ENCODE measurements at regions of chr13 and their contacts with region 1.

Region 1: GRCh38 chr13:50348371-50348770 is 333.1 kb downstream of the KCNRG start:
- DNase-seq: no peak
- ATAC-seq: no peak
- H3K4me3 ChIP-seq: no peak overlapping the region
- H3K27ac ChIP-seq: no peak overlapping the region
- H3K4me1 ChIP-seq: peaks cover 2% of the 10 kb centered on the region; the same call in 1 of the 2 replicates
- H3K27me3 ChIP-seq: peaks cover 14% of the 10 kb centered on the region
- CTCF ChIP-seq: no peak
- POLR2A ChIP-seq: no peak
- RAD21 ChIP-seq: no peak

Region 2: GRCh38 chr13:48843630-48844380 is 1504.6 kb before region 1 on chr13:
- CTCF ChIA-PET with region 1: no interaction called
- POLR2A ChIA-PET with region 1: no interaction called
- dilution Hi-C with region 1: no loop called
- in situ Hi-C with region 1: no loop called
- intact Hi-C with region 1: no loop called
- DNase-seq: no peak
- ATAC-seq: no peak
- H3K4me3 ChIP-seq: no peak overlapping the region
- H3K27ac ChIP-seq: no peak overlapping the region
- H3K4me1 ChIP-seq: no peaks in the 10 kb centered on the region; the same call in 1 of the 2 replicates
- H3K27me3 ChIP-seq: no peaks in the 10 kb centered on the region
- CTCF ChIP-seq: no peak
- POLR2A ChIP-seq: no peak
- RAD21 ChIP-seq: no peak

Region 3: GRCh38 chr13:50376895-50377575 is 28.7 kb after region 1 on chr13:
- CTCF ChIA-PET with region 1: no interaction called
- POLR2A ChIA-PET with region 1: interaction called, 20 read pairs
- dilution Hi-C with region 1: no loop called
- in situ Hi-C with region 1: no loop called
- intact Hi-C with region 1: no loop called
- DNase-seq: no peak
- ATAC-seq: no peak
- H3K4me3 ChIP-seq: no peak overlapping the region
- H3K27ac ChIP-seq: no peak overlapping the region
- H3K4me1 ChIP-seq: peaks cover 2% of the 10 kb centered on the region; the same call in 1 of the 2 replicates
- H3K27me3 ChIP-seq: no peaks in the 10 kb centered on the region; the same call in 1 of the 2 replicates
- CTCF ChIP-seq: no peak
- POLR2A ChIP-seq: no peak
- RAD21 ChIP-seq: no peak

Measured in IMR-90 (cell line).